ENCODE measurements at regions of chr14 and their contacts with region 1.

Region 1: GRCh38 chr14:64478634-64479250 is 13.4 kb downstream of the AKAP5 start:
- DNase-seq: peak; percentile 9
- H3K4me3 Mint-ChIP-seq: no peak overlapping the region
- H3K27ac Mint-ChIP-seq: no peak overlapping the region
- H3K4me1 Mint-ChIP-seq: no peaks in the 10 kb centered on the region
- H3K27me3 Mint-ChIP-seq: no peaks in the 10 kb centered on the region
- CTCF ChIP-seq: peak; percentile 17

Region 2: GRCh38 chr14:64338616-64339316 is 140.0 kb before region 1 on chr14:
- CTCF ChIA-PET with region 1: interaction called, 18 read pairs
- intact Hi-C with region 1: no loop called
- DNase-seq: peak; percentile 93
- H3K4me3 Mint-ChIP-seq: peak overlapping the region; percentile 88
- H3K27ac Mint-ChIP-seq: peak overlapping the region; percentile 78
- H3K4me1 Mint-ChIP-seq: peaks cover 12% of the 10 kb centered on the region
- H3K27me3 Mint-ChIP-seq: no peaks in the 10 kb centered on the region
- CTCF ChIP-seq: no peak

Region 3: DNA sequence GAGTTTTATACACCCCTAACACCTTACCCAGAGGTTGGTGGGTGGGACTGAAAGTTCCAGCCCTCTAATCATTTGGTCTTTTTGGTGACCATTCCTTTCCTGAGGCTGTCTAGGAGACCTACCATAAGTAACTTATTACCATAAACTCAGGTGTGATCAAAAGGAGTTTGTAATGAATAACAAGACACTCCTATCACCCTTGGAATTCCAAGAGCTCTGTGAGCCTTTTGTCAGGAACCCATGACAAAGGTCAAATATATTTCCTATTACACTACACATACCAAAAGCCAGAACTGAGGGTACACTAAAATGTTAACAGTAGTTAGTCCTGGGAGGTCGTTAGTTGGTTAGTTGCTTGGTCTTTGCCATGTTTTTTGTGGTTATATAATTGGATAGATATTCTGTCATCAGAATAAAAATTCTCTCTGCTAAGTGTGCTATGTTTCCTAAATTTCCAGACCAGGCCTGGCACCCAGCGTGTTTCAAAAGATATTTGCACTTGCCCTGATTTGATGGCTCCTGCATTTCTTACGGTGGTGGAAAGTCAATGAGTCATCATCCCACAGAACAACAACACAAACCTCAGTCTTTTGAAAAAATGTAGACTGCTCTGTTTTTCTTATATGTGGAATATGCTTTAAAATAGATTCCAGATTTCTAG is 40.4 kb before region 1 on chr14:
- CTCF ChIA-PET with region 1: no interaction called
- intact Hi-C with region 1: loop called (anchors 5 kb)
- DNase-seq: peak; percentile 50
- H3K4me3 Mint-ChIP-seq: peak overlapping the region; percentile 61
- H3K27ac Mint-ChIP-seq: peak overlapping the region; percentile 97
- H3K4me1 Mint-ChIP-seq: peaks cover 28% of the 10 kb centered on the region
- H3K27me3 Mint-ChIP-seq: no peaks in the 10 kb centered on the region
- CTCF ChIP-seq: no peak

Region 4: DNA sequence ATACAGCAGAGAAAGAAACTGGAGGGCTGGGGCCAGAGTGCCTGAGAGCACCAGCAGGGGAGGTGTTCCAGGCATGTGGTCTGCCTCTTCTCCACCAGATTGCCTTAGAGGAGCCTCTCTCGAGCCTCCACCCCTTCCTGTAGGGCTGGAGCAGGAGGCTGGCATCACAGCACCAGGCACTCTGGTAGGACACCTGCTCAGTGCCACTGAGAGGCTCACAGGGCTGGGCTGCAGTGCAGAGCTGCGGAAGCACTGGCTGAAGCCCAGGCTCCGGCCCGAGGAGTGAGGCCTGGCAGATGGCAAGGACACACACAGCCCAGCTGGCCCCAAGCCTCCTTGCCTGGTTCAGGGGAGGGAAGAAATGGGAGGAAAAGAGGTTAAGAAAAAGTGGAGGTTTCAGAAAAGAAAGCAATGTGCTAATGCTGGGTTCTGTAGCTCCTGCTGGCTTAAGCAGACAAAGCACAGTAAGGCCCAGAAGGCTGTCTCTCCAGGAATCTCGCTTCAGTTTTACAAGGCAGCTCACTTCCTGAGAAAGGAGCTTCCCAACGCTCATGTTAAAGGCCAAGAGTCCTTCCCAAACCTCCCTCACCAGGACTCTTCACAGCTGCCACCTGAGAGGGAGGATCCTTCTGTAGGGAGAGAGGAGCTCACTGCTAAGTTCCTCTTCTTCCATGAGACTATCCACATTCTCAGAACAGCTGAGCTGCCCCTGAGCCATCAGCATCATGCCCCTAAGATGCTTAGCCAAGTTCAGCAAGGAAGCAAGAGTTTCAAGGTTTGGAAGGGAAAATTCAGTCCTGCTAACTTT is 377.2 kb after region 1 on chr14:
- CTCF ChIA-PET with region 1: no interaction called
- intact Hi-C with region 1: no loop called
- DNase-seq: no peak
- H3K4me3 Mint-ChIP-seq: no peak overlapping the region
- H3K27ac Mint-ChIP-seq: no peak overlapping the region
- H3K4me1 Mint-ChIP-seq: no peaks in the 10 kb centered on the region
- H3K27me3 Mint-ChIP-seq: peaks cover 48% of the 10 kb centered on the region
- CTCF ChIP-seq: no peak

Region 5: DNA sequence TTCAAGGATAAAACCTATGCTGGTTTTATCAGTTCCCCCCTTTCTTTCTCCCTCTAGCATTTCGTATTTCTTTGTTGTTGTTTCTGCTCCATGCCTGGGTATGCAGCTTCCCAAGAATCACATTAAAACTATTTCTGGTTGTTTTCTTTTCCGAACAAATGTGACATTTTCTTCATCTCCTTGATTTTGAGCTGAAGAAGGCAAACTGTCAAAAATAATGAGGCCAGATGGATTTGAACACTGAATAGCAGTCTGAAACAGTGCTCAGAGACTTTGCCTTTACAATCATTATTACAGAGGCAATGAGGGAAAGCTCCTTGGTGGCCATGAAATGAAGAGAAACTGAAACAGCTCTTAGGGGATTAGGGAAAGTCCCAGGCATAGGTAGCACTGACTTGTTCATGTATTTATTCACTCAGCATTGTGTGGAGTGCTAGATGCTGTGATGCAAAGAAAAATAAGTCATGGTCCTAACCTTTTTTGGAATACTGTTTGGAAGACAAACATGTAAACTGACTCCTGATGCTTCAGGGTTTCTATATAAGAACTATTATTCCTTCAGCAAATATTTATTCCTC is 1253.3 kb after region 1 on chr14:
- CTCF ChIA-PET with region 1: no interaction called
- intact Hi-C with region 1: no loop called
- DNase-seq: no peak
- H3K4me3 Mint-ChIP-seq: no peak overlapping the region
- H3K27ac Mint-ChIP-seq: no peak overlapping the region
- H3K4me1 Mint-ChIP-seq: no peaks in the 10 kb centered on the region
- H3K27me3 Mint-ChIP-seq: no peaks in the 10 kb centered on the region
- CTCF ChIP-seq: no peak

Measured in Calu3 (cell line).